HepG2 (cell line): ENCODE measurements at regions of chr9 and their contacts with region 1.

Region 1: GRCh38 chr9:101398068-101398929 is at the starts of genes MRPL50 and ZNF189:
- DNase-seq: peak; percentile 100
- ATAC-seq: peak; percentile 99
- H3K4me3 ChIP-seq: peak within 1 kb of the TSS; percentile 82 to 90 (median 86)
- H3K27ac ChIP-seq: peak within 1 kb of the TSS; percentile 85
- H3K4me1 ChIP-seq: peaks cover 74% of the 10 kb centered on the region
- H3K27me3 ChIP-seq: no peaks in the 10 kb centered on the region; a peak in 1 of 5 replicates
- CTCF ChIP-seq: 0 out of 2 replicates have a peak, but pooled peaks have one; percentile 32
- EP300 ChIP-seq: peak in 1 of 2 experiments; percentile 48; a peak in 1 of 4 replicates
- POLR2A ChIP-seq: peak; percentile 85 to 98
- RAD21 ChIP-seq: peak; percentile 57
- total RNA-seq, gene MRPL50: 70.0 and 107 TPM in 2 replicates
- total RNA-seq, gene ZNF189: 50.0 and 65.4 TPM in 2 replicates

Region 2: GRCh38 chr9:101326501-101326900 is 71.8 kb before region 1 on chr9:
- CTCF ChIA-PET with region 1: no interaction called
- POLR2A ChIA-PET with region 1: interaction called, 54 read pairs
- in situ Hi-C with region 1: no loop called
- intact Hi-C with region 1: loop called (anchors 2 kb)
- DNase-seq: peak; percentile 16
- ATAC-seq: no peak
- H3K4me3 ChIP-seq: no peak overlapping the region
- H3K27ac ChIP-seq: peak overlapping the region; percentile 97
- H3K4me1 ChIP-seq: peaks cover 74% of the 10 kb centered on the region
- H3K27me3 ChIP-seq: no peaks in the 10 kb centered on the region
- CTCF ChIP-seq: no peak
- EP300 ChIP-seq: peak in 1 of 2 experiments; percentile 66; a peak in 1 of 4 replicates
- POLR2A ChIP-seq: peak in 1 of 2 experiments; percentile 48; a peak in 1 of 4 replicates
- RAD21 ChIP-seq: no peak

Region 3: DNA sequence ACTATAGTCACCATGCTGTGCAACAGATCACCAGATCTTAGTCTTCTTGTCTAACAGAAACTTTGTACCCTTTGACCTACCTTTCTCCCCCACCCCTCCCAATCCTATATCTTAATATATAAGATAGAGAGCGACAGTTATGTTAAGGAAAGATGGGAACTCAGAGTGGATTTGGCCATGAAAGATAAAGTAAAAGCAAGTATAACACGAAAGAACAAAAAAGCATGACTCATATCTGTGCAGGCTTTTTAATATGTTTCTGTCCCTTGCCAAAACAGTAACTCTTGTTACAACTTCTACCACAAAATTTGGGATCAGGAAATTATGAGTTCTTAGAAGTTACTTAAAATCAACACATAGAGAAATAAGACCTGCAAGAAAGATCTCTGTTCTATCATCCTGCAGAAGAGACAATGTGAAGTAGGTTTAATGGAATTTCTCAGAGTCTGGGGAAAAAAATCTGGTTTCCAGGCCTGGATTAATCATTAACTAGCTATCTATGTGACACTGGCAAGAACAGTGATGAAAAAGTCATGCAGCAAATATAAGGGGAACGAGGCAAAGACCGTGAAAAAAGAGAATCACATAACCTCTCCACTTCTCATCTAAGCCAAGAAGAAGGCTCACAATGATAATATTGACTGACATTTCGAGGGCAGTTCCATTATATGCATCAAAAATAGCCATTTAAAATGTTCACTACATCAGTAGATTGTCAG is 32.1 kb before region 1 on chr9:
- CTCF ChIA-PET with region 1: no interaction called
- POLR2A ChIA-PET with region 1: interaction called, 14 read pairs
- in situ Hi-C with region 1: no loop called
- intact Hi-C with region 1: no loop called
- DNase-seq: peak; percentile 91
- ATAC-seq: peak; percentile 92
- H3K4me3 ChIP-seq: peak overlapping the region in 2 of 3 experiments; percentile 42 to 46; a peak in 3 of 6 replicates
- H3K27ac ChIP-seq: peak overlapping the region; percentile 74
- H3K4me1 ChIP-seq: peaks cover 45% of the 10 kb centered on the region
- H3K27me3 ChIP-seq: no peaks in the 10 kb centered on the region
- CTCF ChIP-seq: no peak
- EP300 ChIP-seq: peak in 1 of 2 experiments; percentile 44; a peak in 1 of 4 replicates
- POLR2A ChIP-seq: peak in 1 of 2 experiments; percentile 41; a peak in 1 of 4 replicates
- RAD21 ChIP-seq: no peak

Region 4: DNA sequence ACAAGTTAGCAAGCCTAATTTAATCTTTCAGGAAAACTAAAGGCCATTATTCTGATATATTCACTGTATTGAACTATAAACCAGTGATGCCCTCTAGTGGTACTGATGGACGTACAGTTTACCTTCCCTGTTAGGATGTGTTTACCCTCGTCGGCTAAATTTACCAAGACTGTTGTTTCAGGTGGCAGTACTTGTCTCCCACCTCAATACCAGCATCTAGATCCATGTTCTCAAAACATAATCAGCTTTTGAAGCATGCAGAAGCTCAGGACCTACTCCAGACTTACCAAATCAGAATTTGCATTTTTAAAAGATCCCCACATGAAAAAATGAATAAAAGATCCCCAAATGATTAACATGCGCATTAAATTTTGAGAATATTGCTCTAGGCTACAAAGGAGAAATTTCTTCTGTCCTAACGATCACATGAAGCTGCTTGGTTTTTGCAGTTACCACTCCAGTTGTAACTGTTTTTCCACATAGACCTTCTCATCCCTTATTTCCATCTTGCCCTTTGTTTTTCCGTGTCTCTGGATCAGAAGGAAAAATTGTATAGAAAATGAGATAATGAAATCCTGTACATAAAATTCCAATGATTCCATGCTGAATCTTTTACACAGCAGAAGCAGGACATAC is 10.3 kb before region 1 on chr9:
- CTCF ChIA-PET with region 1: no interaction called
- POLR2A ChIA-PET with region 1: interaction called, 38 read pairs
- in situ Hi-C with region 1: no loop called
- intact Hi-C with region 1: no loop called
- DNase-seq: peak; percentile 86
- ATAC-seq: peak; percentile 97
- H3K4me3 ChIP-seq: no peak overlapping the region
- H3K27ac ChIP-seq: peak overlapping the region; percentile 41
- H3K4me1 ChIP-seq: peaks cover 81% of the 10 kb centered on the region
- H3K27me3 ChIP-seq: no peaks in the 10 kb centered on the region
- CTCF ChIP-seq: peak; percentile 88
- EP300 ChIP-seq: peak in 1 of 2 experiments; percentile 58; a peak in 1 of 4 replicates
- POLR2A ChIP-seq: no peak
- RAD21 ChIP-seq: peak; percentile 81

Region 5: DNA sequence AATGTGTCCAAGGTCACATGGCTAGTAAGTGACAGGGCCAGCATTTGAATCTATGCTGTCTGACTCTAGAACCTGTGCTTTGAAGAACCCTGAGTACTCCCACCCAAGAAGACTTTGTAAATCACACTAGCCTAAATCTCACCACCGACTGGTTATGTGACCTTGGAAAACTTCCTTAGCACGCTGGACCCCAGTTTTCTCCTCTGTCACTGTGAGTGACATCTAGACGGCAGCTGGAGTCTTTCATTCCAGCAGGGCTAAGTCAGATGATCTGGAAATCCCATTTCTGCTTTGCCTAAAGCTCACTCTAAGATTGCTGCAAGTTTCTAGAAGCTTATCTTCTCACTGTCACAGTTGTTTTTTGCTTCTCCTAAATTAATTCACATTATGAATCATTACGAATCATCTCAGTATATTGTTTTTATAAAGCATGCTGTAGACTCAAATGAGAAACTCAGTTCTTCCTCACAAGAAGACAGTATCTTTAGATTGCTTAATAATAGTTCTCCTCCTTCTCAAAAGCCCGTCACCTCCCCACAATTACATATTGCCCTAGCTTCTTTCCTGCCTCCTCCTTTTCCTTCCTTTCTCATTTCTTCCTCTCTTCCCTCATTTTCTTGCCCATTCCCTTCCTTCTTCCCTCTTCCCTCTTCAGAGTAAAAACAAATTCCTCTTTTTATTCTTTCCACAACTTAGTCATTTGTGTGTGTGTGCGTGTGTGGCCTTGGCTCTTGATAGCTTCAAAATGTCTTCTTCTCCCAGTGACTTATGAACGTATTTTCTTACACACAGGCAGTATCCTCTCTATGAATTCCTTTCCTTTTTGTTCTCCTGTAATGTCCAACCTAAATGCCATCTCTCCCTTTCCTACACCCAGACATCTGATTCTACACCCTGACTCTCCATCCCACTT is 20.5 kb after region 1 on chr9:
- CTCF ChIA-PET with region 1: no interaction called
- POLR2A ChIA-PET with region 1: interaction called, 23 read pairs
- in situ Hi-C with region 1: no loop called
- intact Hi-C with region 1: loop called (anchors 1 kb)
- DNase-seq: no peak
- ATAC-seq: no peak; the same call in 2 of the 3 replicates
- H3K4me3 ChIP-seq: no peak overlapping the region
- H3K27ac ChIP-seq: no peak overlapping the region
- H3K4me1 ChIP-seq: peaks cover 74% of the 10 kb centered on the region
- H3K27me3 ChIP-seq: no peaks in the 10 kb centered on the region
- CTCF ChIP-seq: no peak
- EP300 ChIP-seq: no peak
- POLR2A ChIP-seq: no peak
- RAD21 ChIP-seq: no peak

Region 6: DNA sequence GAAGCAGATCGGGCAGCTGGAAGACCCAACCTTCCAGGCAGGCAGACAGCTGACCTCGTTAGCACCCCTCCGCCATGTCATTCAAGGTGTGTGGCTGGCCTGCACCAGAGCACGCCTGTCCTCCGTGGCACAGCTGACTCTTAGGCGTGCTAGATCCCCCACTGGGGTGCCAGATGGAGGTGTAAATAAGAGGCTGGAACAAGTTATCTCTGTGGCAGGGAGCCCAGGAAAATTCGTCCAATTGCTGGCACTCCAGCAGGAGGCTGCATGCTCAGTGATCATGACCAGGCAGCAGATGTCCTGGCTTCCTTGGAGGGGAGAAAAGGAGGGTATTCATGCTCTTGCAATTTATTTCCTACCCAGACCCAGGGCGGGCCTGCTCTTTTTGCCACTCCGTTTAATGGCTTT is 45.1 kb after region 1 on chr9:
- CTCF ChIA-PET with region 1: no interaction called
- POLR2A ChIA-PET with region 1: interaction called, 23 read pairs
- in situ Hi-C with region 1: no loop called
- intact Hi-C with region 1: no loop called
- DNase-seq: no peak
- ATAC-seq: no peak
- H3K4me3 ChIP-seq: no peak overlapping the region
- H3K27ac ChIP-seq: no peak overlapping the region
- H3K4me1 ChIP-seq: peaks cover 86% of the 10 kb centered on the region
- H3K27me3 ChIP-seq: no peaks in the 10 kb centered on the region
- CTCF ChIP-seq: no peak
- EP300 ChIP-seq: no peak
- POLR2A ChIP-seq: no peak
- RAD21 ChIP-seq: no peak

Region 7: DNA sequence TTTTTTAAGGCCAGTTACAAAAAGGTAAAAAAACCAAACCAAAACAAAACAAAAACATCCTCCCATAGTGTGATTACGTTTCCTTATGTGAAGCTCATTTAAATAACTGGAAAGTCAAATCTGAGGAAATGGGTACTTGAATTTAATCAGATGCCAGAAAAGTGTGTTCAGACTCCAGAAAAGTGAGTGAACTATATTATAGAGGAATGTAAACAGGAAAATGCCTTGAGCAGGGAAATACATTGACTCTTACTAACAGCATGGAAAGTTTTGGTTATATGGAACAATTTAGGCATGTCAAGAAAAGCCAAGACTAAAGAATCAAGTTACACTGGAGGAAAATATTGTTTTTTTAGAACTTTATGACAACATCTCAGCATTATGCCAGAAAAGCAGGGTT is 97.5 kb after region 1 on chr9:
- CTCF ChIA-PET with region 1: no interaction called
- POLR2A ChIA-PET with region 1: no interaction called
- in situ Hi-C with region 1: no loop called
- intact Hi-C with region 1: no loop called
- DNase-seq: no peak
- ATAC-seq: no peak
- H3K4me3 ChIP-seq: no peak overlapping the region
- H3K27ac ChIP-seq: no peak overlapping the region
- H3K4me1 ChIP-seq: no peaks in the 10 kb centered on the region
- H3K27me3 ChIP-seq: no peaks in the 10 kb centered on the region
- CTCF ChIP-seq: no peak
- EP300 ChIP-seq: no peak
- POLR2A ChIP-seq: no peak
- RAD21 ChIP-seq: no peak

Region 8: GRCh38 chr9:101530077-101530711 is 131.9 kb after region 1 on chr9:
- CTCF ChIA-PET with region 1: no interaction called
- POLR2A ChIA-PET with region 1: interaction called, 18 read pairs
- in situ Hi-C with region 1: loop called (anchors 5 kb)
- intact Hi-C with region 1: loop called (anchors 5 kb)
- DNase-seq: peak; percentile 67
- ATAC-seq: peak; percentile 45
- H3K4me3 ChIP-seq: no peak overlapping the region
- H3K27ac ChIP-seq: no peak overlapping the region
- H3K4me1 ChIP-seq: peaks cover 13% of the 10 kb centered on the region
- H3K27me3 ChIP-seq: no peaks in the 10 kb centered on the region; a peak in 2 of 5 replicates
- CTCF ChIP-seq: peak; percentile 81
- EP300 ChIP-seq: no peak
- POLR2A ChIP-seq: no peak
- RAD21 ChIP-seq: peak; percentile 47; the same call in 1 of the 2 replicates